ENCODE measurements at regions of chr1 and their contacts with region 1.

Region 1: DNA sequence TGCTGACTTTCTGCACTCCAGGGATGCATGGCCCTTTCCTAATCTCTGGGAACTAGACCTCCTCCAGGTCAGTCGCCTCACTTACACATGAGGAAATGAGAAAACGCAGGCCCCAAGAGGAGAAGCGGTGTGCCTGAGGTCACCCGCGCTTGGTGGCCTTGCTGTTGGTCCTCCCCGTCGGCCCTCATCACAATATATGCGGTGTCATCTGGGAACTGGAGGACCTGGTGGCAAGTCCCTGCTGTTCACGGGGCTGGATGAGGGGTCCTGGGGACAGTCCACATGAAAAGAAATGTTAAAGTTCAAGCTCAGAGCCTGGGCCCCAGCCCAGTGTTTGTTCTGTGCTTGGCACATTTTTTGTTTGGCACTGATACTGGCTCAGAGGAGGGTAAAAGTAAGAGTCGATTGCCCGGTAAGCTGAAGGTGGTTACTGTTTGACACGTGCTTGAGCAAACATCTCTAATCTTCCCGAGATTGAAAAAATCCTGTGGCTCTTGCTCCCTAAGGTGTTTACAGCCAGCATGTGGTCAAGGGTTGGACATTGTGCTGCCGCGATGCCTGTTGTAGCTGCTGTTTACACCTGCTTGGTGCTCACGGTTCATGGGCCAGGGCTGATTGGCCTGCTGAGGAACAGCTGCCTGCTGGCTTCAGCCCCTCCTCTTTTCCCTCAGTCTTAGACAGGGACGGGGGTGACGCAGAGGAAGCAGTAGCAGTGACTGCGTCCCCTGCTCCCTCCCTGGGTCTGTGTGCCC is 5.2 kb downstream of the COQ8A start:
- DNase-seq: peak; percentile 55 to 83
- ATAC-seq: peak; percentile 52 to 75 (median 65)
- H3K4me3 ChIP-seq: peak overlapping the region; percentile 79
- H3K27ac ChIP-seq: peak overlapping the region; percentile 97
- H3K4me1 ChIP-seq: peaks cover 61% of the 10 kb centered on the region
- H3K27me3 ChIP-seq: no peaks in the 10 kb centered on the region
- CTCF ChIP-seq: no peak

Region 2: DNA sequence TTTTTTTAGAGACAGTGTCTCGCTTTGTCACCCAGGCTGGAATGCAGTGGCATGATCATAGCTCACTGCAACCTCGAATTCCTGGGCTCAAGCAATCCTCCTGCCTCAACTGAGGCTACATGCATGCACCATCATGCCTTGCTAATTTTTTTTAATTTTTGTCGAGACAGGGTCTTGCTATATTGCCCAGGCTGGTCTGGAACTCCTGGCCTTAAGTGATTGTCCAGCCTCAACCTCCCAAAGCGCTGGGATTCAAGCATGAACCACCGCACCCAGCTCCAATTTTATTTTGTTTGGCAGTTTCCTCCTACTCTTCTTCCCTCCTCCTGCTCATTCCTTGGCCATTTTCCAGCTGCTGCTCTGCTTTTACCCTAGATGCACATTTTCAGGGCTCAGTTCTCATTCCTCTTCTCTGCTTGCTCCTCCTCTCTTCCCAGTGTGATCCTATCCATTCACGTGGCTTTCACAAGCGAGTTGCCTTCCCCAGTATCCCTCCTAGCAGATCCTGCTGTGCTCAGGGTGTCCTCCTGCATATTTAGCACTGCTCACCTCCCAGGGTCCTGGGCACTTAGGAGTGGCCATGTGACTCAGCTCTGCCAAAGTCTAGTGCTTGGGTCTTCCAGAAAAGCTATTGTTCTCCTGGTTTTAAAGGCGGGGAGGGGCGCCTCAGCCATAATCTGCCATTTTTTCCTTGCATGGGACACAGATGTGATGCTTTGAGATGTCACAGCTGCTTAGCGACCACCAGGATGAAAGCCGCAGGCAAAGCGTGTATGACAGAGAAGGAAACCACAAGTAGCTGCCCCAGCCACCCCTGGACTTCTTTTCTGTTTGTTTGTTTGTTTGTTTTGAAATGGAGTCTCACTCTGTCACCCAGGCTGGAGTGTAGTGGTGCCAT is 41.2 kb before region 1 on chr1:
- intact Hi-C with region 1: no loop called
- DNase-seq: no peak
- ATAC-seq: peak in 1 of 4 donors; percentile 22
- H3K4me3 ChIP-seq: no peak overlapping the region
- H3K27ac ChIP-seq: no peak overlapping the region
- H3K4me1 ChIP-seq: peaks cover 4% of the 10 kb centered on the region
- H3K27me3 ChIP-seq: no peaks in the 10 kb centered on the region
- CTCF ChIP-seq: no peak

Region 3: DNA sequence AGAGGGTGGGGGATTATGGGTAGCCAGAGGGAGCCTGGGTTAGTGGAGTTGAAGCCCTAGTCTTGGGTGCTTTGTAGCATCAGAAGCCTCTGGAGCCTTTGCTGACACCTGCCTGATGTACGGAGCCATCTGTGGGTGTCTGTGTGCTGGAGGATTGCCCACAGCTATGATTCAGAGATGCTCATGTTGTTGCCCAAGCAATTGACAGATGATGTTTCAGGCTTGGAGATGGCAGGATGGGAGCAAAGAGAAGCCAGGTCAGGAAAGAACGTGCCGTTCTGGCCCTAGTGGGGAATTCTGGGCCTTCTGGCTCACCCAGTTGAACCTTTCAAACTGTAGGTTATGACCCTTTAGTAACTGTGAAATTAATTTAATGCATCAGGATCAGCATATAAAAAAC is 22.4 kb after region 1 on chr1:
- intact Hi-C with region 1: loop called in 1 of 2 experiments (anchors 2 kb)
- DNase-seq: peak; percentile 65 to 88
- ATAC-seq: peak; percentile 76 to 90 (median 82)
- H3K4me3 ChIP-seq: no peak overlapping the region
- H3K27ac ChIP-seq: peak overlapping the region; percentile 95
- H3K4me1 ChIP-seq: peaks cover 83% of the 10 kb centered on the region
- H3K27me3 ChIP-seq: no peaks in the 10 kb centered on the region
- CTCF ChIP-seq: no peak

Region 4: GRCh38 chr1:226973898-226974543 is 28.7 kb after region 1 on chr1:
- intact Hi-C with region 1: loop called in 1 of 2 experiments (anchors 2 kb)
- DNase-seq: peak; percentile 73 to 81
- ATAC-seq: peak; percentile 49 to 71 (median 62)
- H3K4me3 ChIP-seq: peak overlapping the region; percentile 46
- H3K27ac ChIP-seq: peak overlapping the region; percentile 95
- H3K4me1 ChIP-seq: peaks cover 68% of the 10 kb centered on the region
- H3K27me3 ChIP-seq: no peaks in the 10 kb centered on the region
- CTCF ChIP-seq: no peak

Region 5: DNA sequence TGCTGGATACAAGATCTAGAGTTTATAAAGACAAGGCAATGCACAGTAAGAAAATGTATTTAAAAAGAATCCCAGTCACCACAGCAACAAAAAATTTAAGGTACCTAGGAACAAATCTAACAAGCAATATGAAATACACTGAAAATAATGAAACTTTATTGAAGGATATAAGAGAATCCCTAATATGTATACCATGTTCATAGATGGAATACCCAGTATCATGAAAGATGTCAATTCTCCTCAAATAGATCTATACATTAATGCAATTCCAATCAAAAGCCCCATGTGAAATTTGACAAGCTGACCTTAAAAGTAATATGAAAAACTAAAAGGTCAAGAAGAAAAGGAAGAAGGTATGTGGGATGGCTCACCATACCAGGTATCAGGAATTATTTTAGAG is 104.0 kb after region 1 on chr1:
- intact Hi-C with region 1: no loop called
- DNase-seq: no peak
- ATAC-seq: no peak
- H3K4me3 ChIP-seq: no peak overlapping the region
- H3K27ac ChIP-seq: no peak overlapping the region
- H3K4me1 ChIP-seq: no peaks in the 10 kb centered on the region
- H3K27me3 ChIP-seq: no peaks in the 10 kb centered on the region
- CTCF ChIP-seq: no peak